Naive thymus-derived CD4-positive, alpha-beta T cell (primary cell): ENCODE measurements at regions of chr9 and their contacts with region 1.

Region 1: GRCh38 chr9:120842690-120843499 is at the start of gene PSMD5:
- DNase-seq: peak; percentile 86 to 98 (median 95)
- ATAC-seq: peak; percentile 94
- H3K4me3 ChIP-seq: peak within 1 kb of the TSS; percentile 89
- H3K4me3 Mint-ChIP-seq: peak within 1 kb of the TSS; percentile 91 to 99 (median 96)
- H3K27ac ChIP-seq: peak within 1 kb of the TSS; percentile 98
- H3K27ac Mint-ChIP-seq: peak within 1 kb of the TSS; percentile 83 to 99 (median 96)
- H3K4me1 ChIP-seq: peaks cover 34 to 50% of the 10 kb centered on the region in 2 donors
- H3K4me1 Mint-ChIP-seq: peaks cover 53 to 86% (median 79%) of the 10 kb centered on the region in 7 donors
- H3K27me3 ChIP-seq: no peaks in the 10 kb centered on the region
- H3K27me3 Mint-ChIP-seq: no peaks in the 10 kb centered on the region
- total RNA-seq, gene PSMD5: 33.5 to 63.9 (median 44.0) TPM

Region 2: DNA sequence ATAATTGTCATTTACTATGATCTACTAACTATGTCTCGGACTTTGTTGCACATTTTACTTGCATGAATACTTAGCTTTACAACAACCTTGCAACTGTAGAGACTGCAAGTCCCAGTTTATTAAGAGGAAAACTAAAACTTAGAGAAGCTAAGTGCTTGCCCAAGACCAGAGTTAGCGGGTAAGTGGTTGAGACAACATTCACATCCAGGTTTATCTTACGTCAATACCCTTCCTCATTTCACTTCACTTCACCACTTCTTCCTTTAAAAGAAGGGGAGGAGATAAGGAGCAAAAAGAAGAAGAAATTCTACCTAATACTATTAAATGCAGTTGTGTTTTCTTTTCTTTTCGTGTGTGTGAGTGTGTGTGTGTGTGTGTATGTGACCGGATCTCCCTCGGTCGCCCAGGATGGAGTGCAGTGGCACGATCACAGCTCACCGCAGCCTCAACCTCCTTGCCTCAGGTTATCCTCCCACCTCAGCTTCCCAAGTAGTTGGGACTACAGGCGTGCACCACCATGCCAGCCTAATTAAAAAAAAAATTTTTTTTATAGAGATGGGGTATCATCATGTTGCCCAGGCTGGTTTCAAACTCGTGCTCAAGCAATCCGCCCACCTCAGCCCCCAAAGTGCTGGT is 166.0 kb before region 1 on chr9:
- CTCF ChIA-PET with region 1: no interaction called
- POLR2A ChIA-PET with region 1: no interaction called
- intact Hi-C with region 1: no loop called
- DNase-seq: no peak
- ATAC-seq: peak; percentile 57
- H3K4me3 ChIP-seq: no peak overlapping the region
- H3K4me3 Mint-ChIP-seq: no peak overlapping the region
- H3K27ac ChIP-seq: no peak overlapping the region
- H3K27ac Mint-ChIP-seq: no peak overlapping the region
- H3K4me1 ChIP-seq: no peaks in the 10 kb centered on the region
- H3K4me1 Mint-ChIP-seq: peaks cover 0 to 13% (median 4%) of the 10 kb centered on the region in 7 donors
- H3K27me3 ChIP-seq: no peaks in the 10 kb centered on the region
- H3K27me3 Mint-ChIP-seq: no peaks in the 10 kb centered on the region

Region 3: GRCh38 chr9:120714088-120714845 is 128.6 kb before region 1 on chr9 and contains the start of gene MEGF9:
- CTCF ChIA-PET with region 1: no interaction called
- POLR2A ChIA-PET with region 1: no interaction called
- intact Hi-C with region 1: loop called (anchors 1 to 2 kb)
- DNase-seq: peak; percentile 90 to 97 (median 94)
- ATAC-seq: peak; percentile 98
- H3K4me3 ChIP-seq: peak within 1 kb of the TSS; percentile 85
- H3K4me3 Mint-ChIP-seq: peak within 1 kb of the TSS; percentile 82 to 98 (median 87)
- H3K27ac ChIP-seq: peak within 1 kb of the TSS; percentile 79
- H3K27ac Mint-ChIP-seq: peak within 1 kb of the TSS; percentile 31 to 98 (median 87)
- H3K4me1 ChIP-seq: peaks cover 22% of the 10 kb centered on the region in 2 donors
- H3K4me1 Mint-ChIP-seq: peaks cover 18 to 43% (median 36%) of the 10 kb centered on the region in 7 donors
- H3K27me3 ChIP-seq: no peaks in the 10 kb centered on the region
- H3K27me3 Mint-ChIP-seq: no peaks in the 10 kb centered on the region
- total RNA-seq, gene MEGF9: 9.5 to 35.4 (median 11.1) TPM

Region 4: DNA sequence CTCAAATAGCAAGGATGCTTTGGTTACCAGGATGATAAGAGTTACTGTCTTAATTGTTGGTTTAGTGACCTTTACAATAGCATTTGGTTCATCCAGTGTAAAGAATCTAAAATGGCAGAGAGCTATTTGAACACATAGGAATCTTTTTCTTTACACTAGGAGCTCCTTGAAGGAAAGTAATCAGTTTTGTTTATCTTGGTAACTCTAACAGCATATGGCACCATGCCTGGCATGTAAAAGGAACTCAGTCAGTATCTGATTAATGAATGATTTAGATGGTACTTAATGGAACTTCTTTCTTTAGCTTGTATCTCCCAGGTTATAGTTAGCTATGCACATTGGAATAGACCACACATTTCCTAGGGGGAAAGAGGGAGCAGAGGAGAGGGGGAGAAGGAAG is 10.1 kb before region 1 on chr9:
- CTCF ChIA-PET with region 1: interaction called, 3 read pairs
- POLR2A ChIA-PET with region 1: interaction called, 10 read pairs
- intact Hi-C with region 1: no loop called
- DNase-seq: no peak
- ATAC-seq: no peak
- H3K4me3 ChIP-seq: no peak overlapping the region
- H3K4me3 Mint-ChIP-seq: no peak overlapping the region
- H3K27ac ChIP-seq: no peak overlapping the region
- H3K27ac Mint-ChIP-seq: peak overlapping the region in 2 of 9 donors; percentile 9 to 19
- H3K4me1 ChIP-seq: no peaks in the 10 kb centered on the region
- H3K4me1 Mint-ChIP-seq: peaks cover 0 to 18% (median 13%) of the 10 kb centered on the region in 7 donors
- H3K27me3 ChIP-seq: no peaks in the 10 kb centered on the region
- H3K27me3 Mint-ChIP-seq: no peaks in the 10 kb centered on the region

Region 5: GRCh38 chr9:120875954-120876841 is 33.3 kb after region 1 on chr9:
- CTCF ChIA-PET with region 1: interaction called, 3 read pairs
- POLR2A ChIA-PET with region 1: interaction called, 11 read pairs
- intact Hi-C with region 1: loop called in 1 of 2 experiments (anchors 1 kb)
- DNase-seq: peak; percentile 50 to 91 (median 56)
- ATAC-seq: peak; percentile 64
- H3K4me3 ChIP-seq: peak overlapping the region; percentile 66
- H3K4me3 Mint-ChIP-seq: peak overlapping the region; percentile 81 to 95 (median 85)
- H3K27ac ChIP-seq: peak overlapping the region; percentile 88
- H3K27ac Mint-ChIP-seq: peak overlapping the region; percentile 76 to 97 (median 90)
- H3K4me1 ChIP-seq: peaks cover 31 to 39% of the 10 kb centered on the region in 2 donors
- H3K4me1 Mint-ChIP-seq: peaks cover 38 to 78% (median 69%) of the 10 kb centered on the region in 7 donors
- H3K27me3 ChIP-seq: no peaks in the 10 kb centered on the region
- H3K27me3 Mint-ChIP-seq: no peaks in the 10 kb centered on the region

Region 6: GRCh38 chr9:120936011-120936763 is 93.3 kb after region 1 on chr9:
- CTCF ChIA-PET with region 1: interaction called, 10 read pairs
- POLR2A ChIA-PET with region 1: interaction called, 20 read pairs
- intact Hi-C with region 1: loop called (anchors 1 kb)
- DNase-seq: peak; percentile 71 to 89 (median 82)
- ATAC-seq: peak; percentile 85
- H3K4me3 ChIP-seq: peak overlapping the region; percentile 21
- H3K4me3 Mint-ChIP-seq: peak overlapping the region; percentile 33 to 77 (median 62)
- H3K27ac ChIP-seq: peak overlapping the region; percentile 97
- H3K27ac Mint-ChIP-seq: peak overlapping the region; percentile 88 to 100 (median 98)
- H3K4me1 ChIP-seq: peaks cover 61% of the 10 kb centered on the region in 2 donors
- H3K4me1 Mint-ChIP-seq: peaks cover 31 to 71% (median 63%) of the 10 kb centered on the region in 7 donors
- H3K27me3 ChIP-seq: no peaks in the 10 kb centered on the region
- H3K27me3 Mint-ChIP-seq: peaks cover 0 to 2% (median 0%) of the 10 kb centered on the region in 5 donors

Region 7: DNA sequence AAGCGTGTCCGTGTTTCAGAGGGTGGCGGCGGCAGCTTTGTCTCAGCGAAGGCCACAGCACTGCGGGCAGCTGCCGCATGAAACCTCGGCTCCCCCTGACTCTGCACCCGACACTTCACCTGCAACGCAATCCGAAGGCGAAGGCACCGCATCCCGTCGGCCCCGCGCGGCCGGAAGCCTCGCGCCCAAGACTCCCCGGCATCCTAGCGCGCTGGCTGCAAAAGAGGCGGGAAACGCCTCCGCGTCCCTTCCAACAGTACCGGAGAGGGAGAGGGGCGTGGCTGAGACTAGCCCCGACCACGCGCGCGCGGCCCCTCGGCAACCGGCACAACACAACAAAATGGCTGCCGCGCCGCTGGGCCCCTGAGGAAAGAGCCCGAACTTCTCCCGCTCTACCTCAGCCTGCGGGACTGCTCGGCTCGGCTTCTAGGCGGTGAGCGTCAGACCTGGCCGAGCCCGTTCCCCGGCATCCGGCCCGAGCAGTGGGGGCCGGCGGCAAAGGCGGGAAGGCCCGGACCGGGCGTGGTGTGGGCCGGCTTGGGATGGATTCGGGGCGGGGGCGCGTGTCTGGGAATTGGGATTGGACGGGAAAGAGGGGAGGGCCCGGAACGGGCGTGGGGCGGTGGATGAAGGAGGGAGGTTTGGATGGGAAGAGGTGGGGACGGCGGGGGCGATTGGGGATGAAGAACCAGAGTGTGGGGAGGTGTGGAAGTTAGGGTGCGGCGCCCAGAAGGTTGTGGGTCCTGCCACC is 231.9 kb after region 1 on chr9 and contains the start of gene CNTRL:
- CTCF ChIA-PET with region 1: interaction called, 4 read pairs
- POLR2A ChIA-PET with region 1: no interaction called
- intact Hi-C with region 1: loop called (anchors 1 kb)
- DNase-seq: peak; percentile 63 to 92 (median 81)
- ATAC-seq: peak; percentile 90
- H3K4me3 ChIP-seq: peak within 1 kb of the TSS; percentile 90
- H3K4me3 Mint-ChIP-seq: peak within 1 kb of the TSS; percentile 87 to 100 (median 99)
- H3K27ac ChIP-seq: peak within 1 kb of the TSS; percentile 92
- H3K27ac Mint-ChIP-seq: peak within 1 kb of the TSS; percentile 80 to 99 (median 93)
- H3K4me1 ChIP-seq: peaks cover 22 to 24% of the 10 kb centered on the region in 2 donors
- H3K4me1 Mint-ChIP-seq: peaks cover 27 to 65% (median 50%) of the 10 kb centered on the region in 7 donors
- H3K27me3 ChIP-seq: no peaks in the 10 kb centered on the region
- H3K27me3 Mint-ChIP-seq: no peaks in the 10 kb centered on the region
- total RNA-seq, gene CNTRL: 74.5 to 131 (median 88.6) TPM